Gastrocnemius medialis (tissue), 4 donors: ENCODE measurements at regions of chr5 and their contacts with region 1.

Region 1: DNA sequence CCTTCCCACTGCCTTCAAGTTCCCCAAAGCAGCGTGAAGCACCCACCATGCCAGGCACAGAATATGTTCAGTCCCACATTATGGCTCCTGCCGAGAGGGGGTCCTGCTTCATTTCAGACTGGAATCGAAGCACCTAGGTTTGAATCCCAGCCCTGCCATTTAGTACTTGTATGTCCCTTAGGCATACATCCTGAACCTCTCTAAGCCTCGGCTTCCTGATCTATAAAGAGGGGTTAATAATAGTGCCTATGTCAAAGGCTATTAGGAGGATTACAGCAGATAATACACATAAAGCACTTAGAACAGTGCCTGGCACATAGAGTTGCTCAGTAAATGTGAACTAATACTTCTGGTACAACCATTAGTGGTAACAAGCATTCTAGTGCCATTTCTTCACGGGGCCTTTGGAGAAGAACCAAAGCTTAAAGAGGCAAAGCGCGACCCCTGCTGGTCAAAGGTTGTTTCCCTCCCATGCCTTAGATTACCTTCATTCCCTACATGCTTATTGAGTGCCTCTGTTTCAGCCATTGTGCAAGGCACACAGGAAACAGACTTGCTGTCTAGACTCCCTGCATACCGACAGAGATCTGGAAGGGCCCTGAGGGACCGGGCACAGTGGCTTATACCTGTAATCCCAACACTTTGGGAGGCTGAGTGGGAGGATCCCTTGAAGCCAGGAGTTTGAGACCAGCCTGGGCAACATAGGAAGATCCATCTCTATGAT is 98.2 kb downstream of the PPARGC1B start:
- DNase-seq: peak; percentile 70 to 91
- ATAC-seq: peak; percentile 80 to 89
- H3K4me3 ChIP-seq: no peak overlapping the region
- H3K27ac ChIP-seq: peak overlapping the region; percentile 74 to 84 (median 79)
- H3K4me1 ChIP-seq: peaks cover 42 to 43% of the 10 kb centered on the region in 2 donors
- H3K27me3 ChIP-seq: no peaks in the 10 kb centered on the region
- CTCF ChIP-seq: peak; percentile 89 to 94 (median 92)
- POLR2A ChIP-seq: no peak

Region 2: GRCh38 chr5:149636851-149637246 is 191.5 kb before region 1 on chr5:
- in situ Hi-C with region 1: loop called (anchors 5 kb)
- intact Hi-C with region 1: loop called (anchors 1 kb)
- DNase-seq: peak in 1 of 2 donors; percentile 49
- ATAC-seq: peak; percentile 32 to 40
- H3K4me3 ChIP-seq: no peak overlapping the region
- H3K27ac ChIP-seq: no peak overlapping the region
- H3K4me1 ChIP-seq: peaks cover 21 to 26% of the 10 kb centered on the region in 2 donors
- H3K27me3 ChIP-seq: no peaks in the 10 kb centered on the region
- CTCF ChIP-seq: peak; percentile 70 to 93 (median 89)
- POLR2A ChIP-seq: no peak

Region 3: DNA sequence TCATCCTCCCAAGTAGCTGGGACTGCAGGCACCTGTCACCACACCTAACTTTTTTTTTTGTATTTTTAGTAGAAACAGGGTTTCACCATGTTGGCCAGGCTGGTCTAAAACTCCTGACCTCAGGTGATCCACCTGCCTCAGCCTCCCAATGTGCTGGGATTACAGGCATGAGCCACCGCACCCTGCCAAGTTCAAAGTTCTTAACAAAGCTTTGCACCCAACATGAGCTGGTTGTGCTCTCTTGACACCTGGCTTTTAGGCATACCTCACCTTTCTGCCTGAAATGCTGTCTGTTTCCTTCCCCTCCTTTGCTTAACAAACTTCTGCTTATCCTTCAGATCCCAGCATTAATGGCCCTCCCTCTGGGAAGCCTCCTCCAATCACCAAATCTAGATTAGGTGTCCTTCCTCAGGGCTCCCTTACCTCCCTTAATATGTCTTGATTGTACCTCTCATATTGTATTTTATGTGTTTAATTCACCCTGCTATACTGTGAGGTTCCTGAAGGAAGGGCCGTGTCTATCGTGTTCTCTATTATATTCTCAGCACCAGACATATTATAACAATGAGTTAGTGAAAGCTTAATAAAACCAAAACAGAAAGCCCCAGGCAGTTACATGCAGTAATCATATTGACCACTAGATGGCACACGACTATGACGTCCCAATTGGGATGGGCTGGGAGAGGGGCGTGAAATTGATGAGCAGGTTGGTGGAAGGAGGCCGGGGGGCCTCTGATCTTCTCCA is 161.1 kb before region 1 on chr5:
- in situ Hi-C with region 1: loop called (anchors 10 kb)
- intact Hi-C with region 1: loop called (anchors 1 kb)
- DNase-seq: no peak
- ATAC-seq: peak; percentile 41 to 47
- H3K4me3 ChIP-seq: no peak overlapping the region
- H3K27ac ChIP-seq: peak overlapping the region; percentile 5 to 49 (median 27)
- H3K4me1 ChIP-seq: peaks cover 19 to 29% of the 10 kb centered on the region in 2 donors
- H3K27me3 ChIP-seq: no peaks in the 10 kb centered on the region
- CTCF ChIP-seq: peak; percentile 79 to 88 (median 86)
- POLR2A ChIP-seq: no peak

Region 4: GRCh38 chr5:149724130-149724840 is 104.0 kb before region 1 on chr5:
- in situ Hi-C with region 1: loop called in 1 of 4 experiments (anchors 10 kb)
- intact Hi-C with region 1: no loop called
- DNase-seq: no peak
- ATAC-seq: no peak
- H3K4me3 ChIP-seq: no peak overlapping the region
- H3K27ac ChIP-seq: no peak overlapping the region
- H3K4me1 ChIP-seq: peaks cover 0 to 5% of the 10 kb centered on the region in 2 donors
- H3K27me3 ChIP-seq: no peaks in the 10 kb centered on the region
- CTCF ChIP-seq: no peak
- POLR2A ChIP-seq: no peak